ENCODE measurements at regions of chr9 and their contacts with region 1.

Region 1: GRCh38 chr9:31355965-31356364 is 1028.5 kb upstream of the ACO1 start:
- DNase-seq: no peak
- ATAC-seq: no peak
- H3K4me3 ChIP-seq: no peak overlapping the region
- H3K27ac ChIP-seq: no peak overlapping the region
- H3K4me1 ChIP-seq: no peaks in the 10 kb centered on the region
- H3K27me3 ChIP-seq: no peaks in the 10 kb centered on the region
- CTCF ChIP-seq: no peak
- POLR2A ChIP-seq: no peak

Region 2: GRCh38 chr9:31272456-31273295 is 83.3 kb before region 1 on chr9:
- intact Hi-C with region 1: no loop called
- DNase-seq: no peak
- ATAC-seq: no peak
- H3K4me3 ChIP-seq: no peak overlapping the region
- H3K27ac ChIP-seq: no peak overlapping the region
- H3K4me1 ChIP-seq: no peaks in the 10 kb centered on the region
- H3K27me3 ChIP-seq: no peaks in the 10 kb centered on the region
- CTCF ChIP-seq: no peak
- POLR2A ChIP-seq: no peak

Region 3: GRCh38 chr9:31486630-31487029 is 130.7 kb after region 1 on chr9:
- intact Hi-C with region 1: loop called in 1 of 10 experiments (anchors 5 kb)
- DNase-seq: no peak
- ATAC-seq: no peak
- H3K4me3 ChIP-seq: no peak overlapping the region
- H3K27ac ChIP-seq: no peak overlapping the region
- H3K4me1 ChIP-seq: no peaks in the 10 kb centered on the region
- H3K27me3 ChIP-seq: no peaks in the 10 kb centered on the region
- CTCF ChIP-seq: no peak
- POLR2A ChIP-seq: no peak